PC-3 (cell line): ENCODE measurements at regions of chr3 and their contacts with region 1.

Region 1: DNA sequence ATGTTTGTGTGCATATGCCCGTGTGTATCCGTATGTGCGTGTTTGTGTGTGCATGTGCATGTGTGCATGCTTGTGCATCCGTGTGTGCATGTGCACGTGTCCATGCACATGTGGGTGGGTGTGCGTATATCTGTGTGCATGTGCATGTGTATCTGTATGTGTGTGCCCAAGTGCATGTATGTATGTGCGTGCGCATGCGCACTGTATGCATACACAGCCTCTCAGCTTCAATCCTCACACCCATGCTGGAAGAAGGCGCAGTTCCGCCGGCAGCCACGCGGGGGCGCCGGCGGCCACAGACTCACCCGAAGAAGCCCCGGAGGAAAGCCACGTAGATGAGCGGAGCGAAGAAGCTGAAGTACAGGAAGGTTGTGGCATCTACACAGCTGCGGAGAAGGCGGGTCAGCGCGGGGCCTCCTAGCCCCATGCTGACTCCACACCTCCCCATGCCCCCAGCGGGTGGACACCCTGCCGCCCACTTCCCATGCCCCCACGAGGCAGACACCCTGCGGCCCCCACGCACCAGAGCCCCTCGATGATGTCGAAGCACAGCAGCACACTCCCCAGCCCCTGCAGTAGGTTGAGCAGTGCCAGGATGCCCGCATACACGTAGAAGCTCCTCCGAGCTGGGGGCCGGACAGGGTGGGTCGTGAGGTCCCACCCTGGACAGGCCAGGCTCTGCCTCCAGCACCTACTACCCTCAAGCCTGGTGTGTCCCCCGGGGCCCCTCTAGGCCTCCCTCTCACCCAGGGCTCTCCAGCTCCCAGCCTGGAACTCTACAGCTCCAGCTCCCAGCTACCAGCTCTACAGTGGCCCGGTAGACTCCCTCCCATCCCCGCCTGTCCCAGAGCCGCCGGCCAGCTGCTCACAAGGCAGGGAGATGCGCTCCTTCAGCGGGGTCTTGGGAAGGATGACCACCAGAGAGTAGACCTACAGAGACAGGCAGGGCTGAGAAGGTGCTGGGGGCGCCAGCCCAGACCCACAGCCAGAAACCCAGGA is 15.4 kb downstream of the TPRA1 start:
- DNase-seq: peak; percentile 89
- ATAC-seq: peak; percentile 94
- H3K4me3 ChIP-seq: no peak overlapping the region
- H3K27ac ChIP-seq: no peak overlapping the region
- H3K4me1 ChIP-seq: no peaks in the 10 kb centered on the region
- H3K27me3 ChIP-seq: no peaks in the 10 kb centered on the region
- CTCF ChIP-seq: peak; percentile 85

Region 2: GRCh38 chr3:127233371-127233770 is 341.8 kb before region 1 on chr3:
- CTCF ChIA-PET with region 1: no interaction called
- POLR2A ChIA-PET with region 1: no interaction called
- intact Hi-C with region 1: no loop called
- DNase-seq: peak; percentile 41
- ATAC-seq: no peak
- H3K4me3 ChIP-seq: no peak overlapping the region
- H3K27ac ChIP-seq: no peak overlapping the region
- H3K4me1 ChIP-seq: no peaks in the 10 kb centered on the region
- H3K27me3 ChIP-seq: no peaks in the 10 kb centered on the region
- CTCF ChIP-seq: no peak

Region 3: DNA sequence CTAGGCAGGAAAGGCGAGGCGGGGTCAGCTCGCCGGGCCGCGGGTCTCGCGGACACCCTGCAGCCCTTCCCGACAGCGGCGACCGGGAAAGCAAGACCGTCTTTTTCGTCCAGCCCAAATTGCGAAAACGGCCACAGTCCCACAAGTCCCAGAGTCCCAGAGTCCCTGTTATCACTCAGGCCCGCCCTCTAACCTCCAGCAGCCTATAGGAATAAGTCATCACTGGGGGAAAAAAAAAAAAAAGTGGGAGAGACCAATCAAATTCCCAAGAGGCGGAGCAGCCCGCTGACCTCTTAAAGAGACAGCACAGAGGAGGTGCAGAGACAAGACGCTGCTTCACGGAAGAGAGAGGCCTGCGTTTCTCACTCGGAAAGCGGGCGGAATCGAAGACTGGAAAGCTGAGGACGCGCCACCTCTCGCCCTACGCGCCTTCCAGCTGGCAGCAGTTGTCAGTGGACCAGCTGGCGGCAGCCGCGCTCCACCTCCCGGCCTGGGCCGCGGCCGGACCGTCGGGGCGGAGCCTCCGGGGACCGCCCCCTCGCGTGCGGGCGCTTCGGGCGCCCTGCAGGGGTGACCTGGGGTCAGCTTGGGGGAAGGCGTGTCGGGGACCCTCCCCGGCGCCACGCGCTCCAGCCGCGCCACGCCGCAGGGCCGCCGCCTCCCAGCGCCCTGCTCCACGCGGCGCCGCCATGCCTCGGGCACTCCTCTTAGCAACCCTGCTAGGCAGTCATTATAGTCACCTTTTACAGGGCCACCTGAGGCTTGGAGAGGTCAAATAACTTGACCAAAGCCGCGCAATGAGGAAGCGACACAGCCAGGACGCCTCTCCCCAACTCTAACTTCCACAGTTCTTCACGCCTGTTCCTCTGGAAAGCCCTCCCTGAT is 15.7 kb after region 1 on chr3 and contains the start of gene TPRA1:
- CTCF ChIA-PET with region 1: interaction called, 13 read pairs
- POLR2A ChIA-PET with region 1: no interaction called
- intact Hi-C with region 1: no loop called
- DNase-seq: peak; percentile 92
- ATAC-seq: peak; percentile 71
- H3K4me3 ChIP-seq: peak within 1 kb of the TSS; percentile 83
- H3K27ac ChIP-seq: peak within 1 kb of the TSS; percentile 84
- H3K4me1 ChIP-seq: peaks cover 21% of the 10 kb centered on the region
- H3K27me3 ChIP-seq: no peaks in the 10 kb centered on the region
- CTCF ChIP-seq: 0 out of 2 replicates have a peak, but pooled peaks have one; percentile 31
- total RNA-seq, gene TPRA1: 25.7 and 34.0 TPM in 2 replicates